Endothelial cell of umbilical vein (primary cell): ENCODE measurements at regions of chr4 and their contacts with region 1.

Region 1: GRCh38 chr4:127880764-127881562 is at the start of gene PLK4:
- DNase-seq: peak; percentile 97
- H3K4me3 ChIP-seq: peak within 1 kb of the TSS; percentile 92 to 97 (median 97)
- H3K27ac ChIP-seq: peak within 1 kb of the TSS; percentile 84
- H3K4me1 ChIP-seq: peaks cover 8% of the 10 kb centered on the region
- H3K27me3 ChIP-seq: no peaks in the 10 kb centered on the region
- CTCF ChIP-seq: no peak
- POLR2A ChIP-seq: peak; percentile 28
- total RNA-seq, gene PLK4: 34.8 and 37.7 TPM in 2 replicates

Region 2: DNA sequence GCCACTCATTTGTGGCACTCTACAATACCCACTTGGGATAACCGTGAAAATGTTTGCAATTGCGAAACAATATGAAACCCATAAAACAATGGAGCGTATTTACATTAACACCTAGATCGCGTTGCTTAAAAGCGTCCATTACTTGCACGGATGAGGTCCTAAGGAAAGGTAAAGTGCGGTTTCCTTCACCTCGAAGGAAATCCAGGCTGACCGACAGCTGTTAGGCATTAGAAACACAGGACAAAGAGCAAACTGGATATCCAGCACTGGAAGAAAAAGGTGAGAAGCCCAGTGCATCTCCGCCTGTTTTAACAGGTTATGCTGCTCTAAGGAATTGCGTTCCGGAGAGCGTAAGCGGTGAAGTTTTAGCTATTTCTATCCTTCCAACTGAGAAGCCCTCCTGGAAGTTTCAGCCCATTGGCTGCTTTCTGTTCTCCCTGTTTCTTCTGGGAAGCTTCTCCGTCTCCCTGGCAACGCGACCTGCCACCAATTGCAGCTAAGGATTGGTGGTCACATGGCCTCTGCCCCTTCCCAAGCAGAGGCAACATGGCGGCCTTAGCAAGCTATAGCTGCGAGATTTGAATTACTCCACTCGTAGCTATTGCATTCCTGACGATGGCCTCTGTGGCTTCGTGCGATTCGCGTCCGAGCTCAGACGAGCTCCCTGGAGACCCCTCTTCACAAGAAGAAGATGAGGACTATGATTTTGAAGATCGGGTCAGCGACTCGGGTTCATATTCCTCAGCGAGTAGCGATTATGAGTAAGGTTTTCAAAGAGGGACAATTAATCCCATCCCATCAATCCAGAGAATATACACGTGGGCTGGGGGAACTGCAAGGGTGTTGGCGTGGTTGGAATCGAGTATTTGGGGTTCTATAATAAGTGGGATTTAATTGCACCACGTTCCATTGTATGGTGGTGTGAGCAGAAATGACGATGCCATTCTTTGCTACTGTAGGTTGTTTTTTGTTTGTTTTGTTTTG is 248.3 kb before region 1 on chr4 and contains the start of gene INTU:
- CTCF ChIA-PET with region 1: no interaction called
- POLR2A ChIA-PET with region 1: no interaction called
- dilution Hi-C with region 1: no loop called
- intact Hi-C with region 1: loop called (anchors 5 kb)
- DNase-seq: peak; percentile 97
- H3K4me3 ChIP-seq: peak within 1 kb of the TSS; percentile 65 to 93 (median 74)
- H3K27ac ChIP-seq: peak within 1 kb of the TSS; percentile 45
- H3K4me1 ChIP-seq: peaks cover 22% of the 10 kb centered on the region
- H3K27me3 ChIP-seq: no peaks in the 10 kb centered on the region
- CTCF ChIP-seq: no peak
- POLR2A ChIP-seq: peak; percentile 42
- total RNA-seq, gene INTU: 4.3 and 5.4 TPM in 2 replicates

Region 3: GRCh38 chr4:127917151-127917550 is 36.2 kb after region 1 on chr4:
- CTCF ChIA-PET with region 1: no interaction called
- POLR2A ChIA-PET with region 1: no interaction called
- dilution Hi-C with region 1: no loop called
- intact Hi-C with region 1: no loop called
- DNase-seq: no peak
- H3K4me3 ChIP-seq: no peak overlapping the region
- H3K27ac ChIP-seq: no peak overlapping the region
- H3K4me1 ChIP-seq: no peaks in the 10 kb centered on the region
- H3K27me3 ChIP-seq: no peaks in the 10 kb centered on the region
- CTCF ChIP-seq: no peak
- POLR2A ChIP-seq: no peak

Region 4: DNA sequence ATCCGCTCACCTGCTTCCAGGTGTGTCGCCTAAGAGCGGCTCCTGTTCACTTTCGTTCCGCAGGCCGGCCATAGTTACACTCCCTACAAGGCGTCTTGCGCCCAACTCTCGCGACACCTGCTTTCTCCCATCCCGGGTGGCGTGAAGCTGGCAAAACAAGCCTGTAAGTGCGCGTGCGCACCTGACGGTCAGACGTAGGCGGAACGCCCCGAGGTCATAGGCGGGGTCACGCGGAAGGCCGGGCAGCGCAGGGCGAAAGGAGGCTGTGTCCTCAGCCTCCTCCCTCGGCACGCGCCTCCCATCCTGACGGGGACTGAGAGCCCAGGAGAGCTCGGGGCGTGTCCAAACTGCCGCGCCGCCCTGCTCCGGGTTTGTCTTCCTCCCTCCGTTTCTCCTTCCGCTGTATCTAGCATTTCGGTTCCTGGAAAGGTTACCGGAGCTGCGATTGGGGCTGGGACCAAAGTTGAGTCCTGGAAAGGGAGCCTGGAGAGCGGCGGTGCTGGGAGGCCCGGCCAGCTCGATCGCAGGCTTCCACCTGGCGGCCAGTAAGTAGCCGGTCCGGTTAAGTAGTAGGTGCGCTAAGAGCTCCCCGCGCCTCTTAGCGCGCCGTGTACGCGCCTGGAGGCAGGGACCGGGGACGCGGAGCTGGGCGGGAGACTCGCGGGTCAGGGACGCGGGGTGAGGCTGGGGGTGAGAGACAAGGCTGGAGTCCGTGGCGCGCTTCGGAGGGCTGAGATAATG is 84.3 kb after region 1 on chr4 and contains the starts of genes ABHD18 and MFSD8:
- CTCF ChIA-PET with region 1: interaction called, 10 read pairs
- POLR2A ChIA-PET with region 1: no interaction called
- dilution Hi-C with region 1: no loop called
- intact Hi-C with region 1: loop called (anchors 1 kb)
- DNase-seq: peak; percentile 99
- H3K4me3 ChIP-seq: peak within 1 kb of the TSS; percentile 70 to 85 (median 71)
- H3K27ac ChIP-seq: peak within 1 kb of the TSS; percentile 62
- H3K4me1 ChIP-seq: peaks cover 8% of the 10 kb centered on the region
- H3K27me3 ChIP-seq: no peaks in the 10 kb centered on the region
- CTCF ChIP-seq: peak; percentile 32 to 61
- POLR2A ChIP-seq: peak; percentile 76
- total RNA-seq, gene ABHD18: 9.1 and 10.1 TPM in 2 replicates
- total RNA-seq, gene MFSD8: 19.4 and 21.3 TPM in 2 replicates